ENCODE measurements at regions of chr11 and their contacts with region 1.

Region 1: DNA sequence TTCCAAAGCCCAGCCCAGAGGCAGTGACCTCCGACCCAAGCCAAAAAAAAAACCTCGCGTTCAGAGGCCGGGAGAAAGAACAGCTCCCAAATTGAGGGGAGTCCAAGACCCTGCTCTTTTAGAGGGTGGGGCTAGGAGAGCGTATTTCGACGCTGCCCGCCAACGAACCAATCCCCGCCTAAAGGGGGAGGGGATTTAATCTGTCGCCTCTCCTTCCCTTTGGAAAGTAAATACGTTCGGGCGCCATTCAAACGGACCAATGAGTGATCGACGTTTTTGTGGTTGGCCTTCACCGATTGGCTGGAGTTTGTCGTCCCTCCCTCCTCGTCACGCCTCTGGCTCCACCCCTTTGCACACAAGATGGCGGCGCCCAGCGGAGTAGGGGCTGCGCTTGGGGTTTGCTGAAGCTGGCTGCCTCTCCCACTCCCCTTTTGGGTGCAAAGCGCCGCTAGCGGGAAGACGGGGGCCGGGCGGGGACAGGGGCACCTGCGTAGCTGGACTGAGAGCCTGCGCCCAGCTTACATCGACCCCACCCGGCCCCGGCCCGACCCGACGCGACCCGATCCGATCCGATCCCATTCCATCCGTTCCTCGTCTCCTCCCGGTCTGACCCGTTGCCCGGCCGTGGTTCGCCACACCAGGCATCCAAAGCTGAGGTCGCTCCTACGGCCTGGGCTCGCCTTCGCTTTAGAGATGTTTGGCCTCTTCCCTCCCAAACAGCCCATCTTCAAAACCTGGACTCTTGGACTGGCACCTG is at the start of gene RNF26:
- DNase-seq: peak; percentile 99
- CTCF ChIP-seq: no peak

Region 2: DNA sequence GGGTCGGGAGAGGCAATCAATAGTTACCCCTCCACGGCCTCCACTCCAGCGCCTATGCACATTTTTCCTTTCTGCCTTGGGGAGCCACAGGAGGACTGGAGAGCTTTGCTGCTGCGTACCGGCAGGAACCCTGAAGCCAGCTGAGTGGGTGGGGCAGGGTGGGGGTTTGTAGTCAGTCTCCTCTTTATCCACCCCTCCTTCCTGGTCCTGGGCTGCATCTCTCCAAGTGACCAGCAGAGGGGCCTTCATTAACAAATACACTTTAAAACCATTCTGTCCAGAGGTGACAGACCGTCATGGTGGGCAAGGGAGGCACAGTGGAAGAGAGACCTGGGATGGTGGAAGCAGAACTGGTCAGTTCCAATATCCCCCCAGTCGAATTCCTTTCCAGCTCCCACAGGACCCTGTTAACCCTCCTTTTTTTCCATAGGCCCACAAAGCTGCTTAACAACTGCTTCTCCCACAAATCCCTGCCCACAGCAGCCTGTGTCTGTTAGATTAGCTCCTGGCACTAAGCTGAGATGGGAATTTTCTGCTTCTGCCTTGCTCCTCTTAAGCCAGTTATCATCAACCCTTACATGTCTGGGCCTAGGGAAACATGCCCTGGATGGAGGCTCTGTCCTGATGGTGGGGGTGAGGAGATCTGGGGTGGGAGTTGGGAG is 189.4 kb before region 1 on chr11:
- CTCF ChIA-PET with region 1: interaction called, 15 read pairs
- POLR2A ChIA-PET with region 1: no interaction called
- DNase-seq: peak; percentile 82
- CTCF ChIP-seq: peak; percentile 61

Region 3: DNA sequence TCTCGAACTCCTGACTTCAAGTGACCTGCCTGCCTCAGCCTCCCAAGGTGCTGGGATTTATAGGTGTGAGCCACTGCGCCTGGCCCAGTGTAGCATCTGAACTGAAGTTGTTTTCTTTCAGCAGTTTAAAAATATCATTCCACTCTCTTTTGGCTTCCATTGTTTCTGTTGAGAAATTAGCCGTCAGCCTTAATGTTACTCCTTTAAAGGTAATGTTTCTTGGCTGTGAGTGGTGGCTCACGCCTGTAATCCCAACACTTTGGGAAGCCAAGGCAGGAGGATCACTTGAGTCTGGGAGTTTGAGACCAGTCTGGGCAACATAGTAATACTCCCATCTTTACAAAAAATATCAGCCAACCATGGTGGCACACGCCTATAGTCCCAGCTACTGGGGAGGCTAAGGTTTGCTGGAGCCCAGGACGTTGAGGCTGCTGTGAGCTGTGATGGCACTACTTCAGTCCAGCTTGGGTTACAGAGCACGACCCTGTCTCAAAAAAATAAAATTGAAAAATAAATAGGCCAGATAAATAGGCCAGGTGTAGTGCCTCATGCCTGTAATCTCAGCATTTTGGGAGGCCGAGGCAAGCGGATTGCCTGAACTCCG is 43.4 kb before region 1 on chr11:
- CTCF ChIA-PET with region 1: no interaction called
- POLR2A ChIA-PET with region 1: no interaction called
- DNase-seq: no peak
- CTCF ChIP-seq: no peak

Region 4: GRCh38 chr11:119306373-119306890 is 27.9 kb before region 1 on chr11:
- CTCF ChIA-PET with region 1: interaction called, 12 read pairs
- POLR2A ChIA-PET with region 1: no interaction called
- DNase-seq: no peak
- CTCF ChIP-seq: no peak

Region 5: GRCh38 chr11:119347242-119347641 is 12.9 kb after region 1 on chr11:
- CTCF ChIA-PET with region 1: interaction called, 43 read pairs
- POLR2A ChIA-PET with region 1: no interaction called
- DNase-seq: no peak
- CTCF ChIP-seq: no peak

Region 6: DNA sequence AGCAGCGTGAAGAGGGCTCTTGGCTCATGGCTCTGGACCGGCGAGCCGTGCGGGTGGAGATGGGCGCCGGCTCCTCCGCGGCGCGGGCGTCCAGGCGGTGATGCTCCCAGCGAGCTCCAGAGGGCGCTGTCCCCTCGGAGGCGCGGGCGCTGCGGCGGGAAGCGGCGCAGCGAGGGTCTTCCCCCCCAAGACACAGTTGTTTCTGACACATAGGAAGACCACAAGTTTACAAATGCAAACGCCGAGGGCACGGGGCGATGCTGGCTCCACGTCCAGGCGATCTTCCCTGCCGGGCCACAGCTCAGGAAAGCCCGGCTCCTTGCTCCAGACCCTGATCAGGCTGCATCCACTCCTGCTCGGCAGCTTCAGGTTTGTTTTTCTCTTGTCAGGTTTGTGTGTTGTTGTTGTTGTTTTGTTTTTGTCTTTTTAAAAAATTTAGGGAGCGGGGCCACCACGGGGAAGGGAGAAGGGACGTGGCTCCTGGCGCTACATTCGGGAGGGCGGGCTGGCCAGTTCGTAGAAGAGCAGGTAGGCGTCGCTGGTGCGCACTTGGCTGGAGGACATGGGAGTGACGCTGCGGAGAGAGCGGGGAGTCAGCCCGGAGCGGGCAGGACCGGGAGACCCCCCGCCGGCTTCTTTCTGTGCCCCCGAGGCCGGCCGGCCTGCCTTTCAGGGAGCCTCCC is 22.1 kb after region 1 on chr11:
- CTCF ChIA-PET with region 1: interaction called, 58 read pairs
- POLR2A ChIA-PET with region 1: no interaction called
- DNase-seq: peak; percentile 87
- CTCF ChIP-seq: peak; percentile 97

Region 7: DNA sequence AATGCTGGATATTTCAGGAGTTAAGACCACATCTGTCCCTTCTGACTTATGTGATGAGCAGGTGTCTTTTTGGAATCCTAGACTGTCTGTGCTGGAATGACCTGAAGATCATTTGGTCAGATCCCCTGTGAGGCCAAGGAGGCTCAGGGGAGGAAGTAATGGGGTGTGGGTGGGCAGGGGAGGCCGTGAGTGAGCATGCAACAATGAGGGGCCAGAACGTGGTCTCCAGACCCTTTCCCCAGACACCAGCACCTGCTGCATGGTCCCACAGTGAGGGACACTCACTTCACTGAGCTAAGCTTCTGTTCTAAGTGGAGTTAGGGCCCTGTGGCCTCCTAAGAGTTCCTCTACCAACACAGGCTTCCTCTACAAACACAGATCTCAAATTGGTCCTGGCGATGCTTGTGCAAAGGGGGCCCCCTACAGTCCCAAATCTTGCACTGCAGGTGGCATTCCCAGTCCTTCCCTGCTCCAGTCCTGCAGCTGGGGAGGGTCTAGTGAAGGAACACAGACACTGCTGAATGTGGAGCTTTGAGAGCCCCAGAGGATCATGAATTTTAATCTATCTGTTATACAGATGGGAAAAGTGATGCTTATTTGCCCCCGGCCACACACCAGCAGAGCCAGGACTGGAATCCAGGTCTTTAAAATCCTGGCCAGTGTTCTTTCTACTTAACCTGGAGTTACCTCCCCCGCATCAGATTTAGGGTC is 39.7 kb after region 1 on chr11:
- CTCF ChIA-PET with region 1: interaction called, 19 read pairs
- POLR2A ChIA-PET with region 1: no interaction called
- DNase-seq: peak; percentile 63
- CTCF ChIP-seq: peak; percentile 84

Region 8: DNA sequence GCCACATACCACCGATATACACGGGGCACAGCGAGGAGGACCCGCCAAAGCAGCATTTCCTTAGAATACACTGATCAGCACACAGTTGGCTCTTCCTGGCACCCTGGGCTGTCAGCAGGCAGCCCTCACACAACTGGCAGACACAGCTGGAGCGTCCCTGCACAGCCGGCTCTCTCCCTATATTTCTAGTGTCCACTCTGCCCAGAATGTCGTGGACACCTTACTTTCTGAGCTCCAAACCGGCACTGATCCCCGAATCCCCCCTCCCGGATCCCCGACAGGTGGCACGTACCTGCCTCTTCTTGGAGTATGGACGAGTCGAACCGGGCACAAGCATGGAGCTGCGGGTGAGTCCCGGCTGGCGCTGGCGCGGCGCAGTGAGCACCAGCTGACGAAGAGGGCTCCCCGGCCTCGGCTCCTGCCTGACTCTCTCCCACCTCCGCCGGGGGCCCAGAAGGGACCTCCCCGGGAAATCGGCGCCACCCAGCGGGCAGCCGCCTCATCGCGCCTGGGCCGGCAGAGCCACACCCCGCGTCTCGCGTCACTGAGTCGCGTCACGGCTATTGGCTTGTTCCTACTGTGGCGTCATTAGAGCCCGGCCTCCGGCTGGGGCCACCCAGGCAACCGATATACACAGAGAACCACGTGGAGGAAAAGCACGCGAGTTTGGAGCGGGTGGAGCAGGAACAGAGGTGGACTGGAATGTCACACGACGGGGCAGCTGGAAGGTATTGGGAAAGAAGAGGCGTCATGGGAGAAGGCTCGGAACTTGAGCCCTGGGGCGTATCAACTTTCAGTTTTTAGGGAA is 47.0 kb after region 1 on chr11 and contains the start of gene USP2:
- CTCF ChIA-PET with region 1: interaction called, 11 read pairs
- POLR2A ChIA-PET with region 1: no interaction called
- DNase-seq: peak; percentile 95
- CTCF ChIP-seq: peak; percentile 89

Region 9: DNA sequence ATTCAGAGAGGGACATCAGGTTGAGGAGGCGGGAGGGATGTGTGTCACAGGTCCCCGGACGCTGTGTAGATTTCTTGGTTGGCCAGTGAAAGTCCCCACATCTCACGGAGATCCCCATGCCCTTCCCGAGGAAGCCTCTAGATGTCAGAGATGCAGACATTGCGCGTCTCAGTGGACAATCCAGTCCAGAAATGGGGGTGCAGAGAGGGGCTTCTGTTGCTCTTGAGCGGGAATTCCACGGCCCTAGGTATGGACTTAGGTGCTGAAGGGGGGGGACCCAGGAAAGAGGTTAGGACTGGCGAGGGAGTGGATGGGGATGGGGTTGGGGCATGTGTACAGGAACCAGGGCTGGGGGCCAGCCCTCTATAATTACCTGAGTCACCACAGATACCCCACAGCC is 81.6 kb after region 1 on chr11:
- CTCF ChIA-PET with region 1: no interaction called
- POLR2A ChIA-PET with region 1: no interaction called
- DNase-seq: peak; percentile 16
- CTCF ChIP-seq: no peak

Measured in GM10248 (cell line).